GM12878 (cell line): ENCODE measurements at regions of chr1 and their contacts with region 1.

Region 1: DNA sequence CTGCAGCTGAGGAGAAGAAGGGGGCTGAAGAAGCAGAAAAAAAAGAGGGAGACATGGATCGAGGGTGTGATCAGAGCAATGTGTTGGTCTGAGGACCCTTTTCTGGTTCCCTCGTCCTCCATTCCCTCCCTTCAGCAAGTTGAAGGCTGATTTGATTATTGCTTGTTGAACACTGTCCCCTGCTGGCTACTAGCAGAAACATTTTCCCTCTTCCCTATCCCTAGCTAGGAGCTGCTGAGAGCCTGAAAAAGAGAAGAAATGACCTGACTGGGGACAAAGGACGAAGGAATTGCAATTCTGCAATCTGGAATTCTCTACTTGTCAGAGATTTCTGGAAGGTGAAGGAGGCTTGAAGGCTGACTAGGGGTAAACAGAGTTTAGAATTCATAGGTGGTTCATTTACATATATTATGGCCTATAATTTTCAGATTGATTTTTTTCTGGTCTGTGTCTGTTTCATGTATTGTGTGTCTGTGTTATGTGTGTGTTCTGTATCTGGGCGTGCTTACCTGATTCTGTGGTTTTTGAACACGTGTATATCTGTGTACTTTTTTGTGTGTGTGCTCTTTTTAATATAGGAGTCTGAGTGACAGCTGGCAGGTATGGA is 9.8 kb downstream of the NHLH1 start:
- DNase-seq: peak; percentile 36
- ATAC-seq: peak; percentile 92
- H3K4me3 ChIP-seq: no peak overlapping the region
- H3K27ac ChIP-seq: no peak overlapping the region
- H3K4me1 ChIP-seq: peaks cover 15% of the 10 kb centered on the region
- H3K27me3 ChIP-seq: no peaks in the 10 kb centered on the region
- CTCF ChIP-seq: peak; percentile 96 to 99 (median 99); a peak in 5 of 6 replicates
- EP300 ChIP-seq: no peak
- POLR2A ChIP-seq: no peak
- RAD21 ChIP-seq: peak; percentile 95

Region 2: DNA sequence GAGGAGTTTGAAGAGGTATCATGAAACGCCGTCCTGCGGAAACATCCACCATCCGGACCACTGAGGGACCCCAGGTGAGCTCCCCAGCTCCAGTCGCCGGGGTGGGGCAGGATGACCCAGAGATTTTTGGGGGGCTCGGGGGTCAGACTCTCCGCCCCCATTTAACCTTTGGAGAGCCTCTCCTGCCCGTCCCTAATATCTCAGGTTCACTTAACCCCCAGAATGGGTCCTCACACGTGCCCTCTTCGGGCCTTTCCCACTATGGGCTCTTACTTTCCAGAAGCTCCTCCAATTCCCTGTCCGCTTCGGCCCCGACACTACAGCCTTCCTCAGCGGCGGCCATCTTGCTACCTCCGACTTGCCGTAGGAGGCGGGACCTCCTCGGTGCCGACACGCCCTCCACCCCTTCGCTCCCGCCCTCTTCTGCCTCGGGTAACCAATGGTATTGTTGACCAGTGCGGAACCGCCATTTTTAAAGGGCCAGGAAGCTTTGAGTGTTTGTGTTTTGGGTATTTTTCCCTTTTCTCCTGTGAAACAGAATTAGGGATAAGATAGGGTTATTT is 91.8 kb before region 1 on chr1 and contains the start of gene PEX19:
- CTCF ChIA-PET with region 1: interaction called, 13 read pairs
- POLR2A ChIA-PET with region 1: no interaction called
- RAD21 ChIA-PET with region 1: interaction called, 5 read pairs
- SMC1A ChIA-PET with region 1: interaction called, 3 read pairs
- in situ Hi-C with region 1: no loop called
- intact Hi-C with region 1: no loop called
- DNase-seq: peak; percentile 71
- ATAC-seq: peak; percentile 100
- H3K4me3 ChIP-seq: peak within 1 kb of the TSS; percentile 91
- H3K27ac ChIP-seq: peak within 1 kb of the TSS; percentile 68
- H3K4me1 ChIP-seq: no peaks in the 10 kb centered on the region
- H3K27me3 ChIP-seq: no peaks in the 10 kb centered on the region
- CTCF ChIP-seq: no peak
- EP300 ChIP-seq: no peak
- POLR2A ChIP-seq: peak; percentile 90
- RAD21 ChIP-seq: no peak
- polyA plus RNA-seq, gene PEX19: 29.4 to 50.8 TPM

Region 3: DNA sequence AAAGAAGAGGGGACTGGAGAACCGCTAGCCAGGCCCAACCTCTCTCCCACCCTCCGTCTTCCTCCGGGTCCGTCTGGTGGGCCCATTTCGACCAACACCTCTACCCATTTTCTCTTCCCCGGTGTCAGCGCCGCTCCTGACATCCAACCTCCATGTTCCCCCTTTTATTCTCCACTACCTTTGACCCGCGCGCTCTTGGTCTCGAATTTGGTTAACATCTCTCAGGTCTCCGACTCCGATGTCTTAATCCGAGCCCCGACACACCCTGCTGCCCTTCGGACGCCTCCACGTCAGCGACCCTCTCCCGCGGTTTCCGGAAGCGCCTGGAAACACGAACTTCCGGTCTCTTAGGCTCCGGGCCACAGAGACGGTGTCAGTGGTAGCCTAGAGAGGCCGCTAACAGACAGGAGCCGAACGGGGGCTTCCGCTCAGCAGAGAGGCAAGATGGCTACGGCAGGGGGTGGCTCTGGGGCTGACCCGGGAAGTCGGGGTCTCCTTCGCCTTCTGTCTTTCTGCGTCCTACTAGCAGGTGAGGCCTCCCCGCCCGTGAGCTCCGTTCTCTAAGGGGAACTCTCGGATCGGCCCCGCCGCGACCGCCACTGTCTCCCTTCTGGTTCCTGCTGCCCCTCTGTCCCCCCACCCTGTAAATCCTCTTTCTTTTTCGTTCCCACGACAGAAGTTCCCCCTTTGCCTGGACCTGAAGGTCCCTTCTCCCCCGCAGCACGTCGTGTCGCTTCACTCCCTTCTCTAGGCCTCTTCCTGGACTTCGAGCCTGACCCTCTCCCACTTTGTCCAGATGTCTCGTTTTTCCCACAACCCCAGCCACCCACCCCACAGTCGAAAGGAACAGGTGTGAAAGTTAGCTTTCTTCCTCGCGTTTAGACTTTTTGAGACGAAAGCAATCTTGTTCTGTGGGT is 33.4 kb before region 1 on chr1 and contains the starts of genes COPA and NCSTN:
- CTCF ChIA-PET with region 1: interaction called, 23 read pairs
- POLR2A ChIA-PET with region 1: no interaction called
- RAD21 ChIA-PET with region 1: interaction called, 11 read pairs
- SMC1A ChIA-PET with region 1: interaction called, 7 read pairs
- in situ Hi-C with region 1: no loop called
- intact Hi-C with region 1: no loop called
- DNase-seq: peak; percentile 75
- ATAC-seq: peak; percentile 90
- H3K4me3 ChIP-seq: peak within 1 kb of the TSS; percentile 96
- H3K27ac ChIP-seq: peak within 1 kb of the TSS; percentile 97
- H3K4me1 ChIP-seq: peaks cover 23% of the 10 kb centered on the region
- H3K27me3 ChIP-seq: no peaks in the 10 kb centered on the region
- CTCF ChIP-seq: no peak
- EP300 ChIP-seq: no peak
- POLR2A ChIP-seq: peak; percentile 96
- RAD21 ChIP-seq: no peak
- polyA plus RNA-seq, gene COPA: 53.7 to 70.6 TPM
- polyA plus RNA-seq, gene NCSTN: 33.3 to 41.6 TPM

Region 4: DNA sequence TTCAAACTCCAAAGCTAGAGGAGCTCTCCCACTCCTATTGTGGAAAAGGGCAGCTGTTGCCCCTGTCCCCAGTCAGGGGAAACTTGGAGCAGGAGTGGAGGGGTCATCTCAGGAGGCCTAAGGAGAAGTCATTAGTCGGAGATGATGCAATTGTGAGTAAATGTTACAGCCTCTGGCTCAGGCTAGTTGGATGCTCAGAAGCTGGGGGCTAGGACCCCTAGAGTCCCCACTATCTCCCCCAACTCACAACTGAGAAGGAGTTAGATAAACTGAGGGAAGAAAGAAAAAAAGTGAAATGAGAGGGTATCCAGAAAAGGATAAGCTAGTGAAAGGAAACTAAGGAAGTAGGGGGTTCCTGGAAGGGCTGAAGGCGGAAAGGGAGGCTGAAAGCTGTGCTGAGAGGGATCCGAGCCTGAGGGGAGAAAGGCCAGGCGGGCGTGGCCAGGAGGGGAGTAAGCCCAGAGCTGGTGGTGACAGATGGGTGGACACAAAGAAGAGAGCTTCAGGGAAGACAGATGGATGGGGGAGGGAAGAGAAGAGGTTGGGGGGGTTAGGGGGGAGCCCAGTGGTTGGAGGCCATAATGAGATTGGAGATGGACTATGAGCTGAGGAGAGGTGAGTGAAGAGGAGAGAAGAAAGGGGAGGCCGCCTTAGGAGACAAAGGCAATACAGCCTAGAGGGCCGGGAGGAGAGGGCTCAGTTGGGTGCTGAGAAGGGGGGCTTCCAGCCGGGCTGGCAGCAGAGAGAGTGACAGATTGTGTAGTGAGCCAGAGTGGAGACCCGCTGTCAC is 14.3 kb before region 1 on chr1:
- CTCF ChIA-PET with region 1: interaction called, 45 read pairs
- POLR2A ChIA-PET with region 1: interaction called, 4 read pairs
- RAD21 ChIA-PET with region 1: interaction called, 7 read pairs
- SMC1A ChIA-PET with region 1: interaction called, 3 read pairs
- in situ Hi-C with region 1: no loop called
- intact Hi-C with region 1: no loop called
- DNase-seq: no peak
- ATAC-seq: no peak
- H3K4me3 ChIP-seq: no peak overlapping the region
- H3K27ac ChIP-seq: no peak overlapping the region
- H3K4me1 ChIP-seq: no peaks in the 10 kb centered on the region
- H3K27me3 ChIP-seq: no peaks in the 10 kb centered on the region
- CTCF ChIP-seq: no peak
- EP300 ChIP-seq: no peak
- POLR2A ChIP-seq: no peak
- RAD21 ChIP-seq: no peak